ENCODE measurements at regions of chr2 and their contacts with region 1.

Region 1: DNA sequence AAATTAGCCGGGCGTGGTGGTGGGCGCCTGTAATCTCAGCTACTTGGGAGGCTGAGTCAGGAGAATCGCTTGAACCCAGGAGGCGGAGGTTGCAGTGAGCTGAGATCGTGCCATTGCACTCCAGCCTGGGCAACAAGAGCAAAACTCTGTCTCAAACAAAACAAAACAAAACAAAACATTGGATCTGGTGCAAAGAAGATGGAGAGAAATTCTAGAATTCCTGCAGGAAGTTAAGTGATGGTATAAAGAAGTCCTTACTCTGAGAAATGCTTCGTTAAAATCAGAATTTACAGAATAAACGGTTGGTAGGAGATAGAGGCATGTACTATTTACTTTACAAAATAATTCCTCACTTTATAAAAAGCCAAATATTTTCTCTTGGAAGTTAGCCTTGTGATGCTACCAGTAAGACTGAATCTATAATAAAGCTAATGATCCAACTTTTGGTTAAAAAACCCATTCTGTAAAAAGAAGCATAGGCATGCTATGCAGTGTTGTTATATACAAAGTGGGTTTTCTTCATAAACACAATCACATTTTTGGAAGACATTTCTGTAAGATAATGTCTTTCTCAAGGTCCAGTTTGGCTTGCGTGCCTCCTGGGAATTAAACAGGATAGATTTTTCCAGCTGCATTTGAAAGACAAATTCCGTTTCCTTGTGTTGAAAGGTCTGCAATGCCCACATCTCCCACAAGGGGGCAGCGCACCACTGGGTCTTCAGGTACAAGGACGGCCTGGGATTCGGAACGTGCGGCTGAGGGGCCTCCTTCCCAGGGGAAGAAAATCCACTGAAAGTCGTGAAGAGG is 35.6 kb upstream of the PNO1 start:
- DNase-seq: peak; percentile 69
- ATAC-seq: peak; percentile 26
- H3K4me3 Mint-ChIP-seq: peak overlapping the region; percentile 77
- H3K27ac Mint-ChIP-seq: peak overlapping the region; percentile 97
- H3K4me1 Mint-ChIP-seq: peaks cover 48% of the 10 kb centered on the region
- H3K27me3 Mint-ChIP-seq: no peaks in the 10 kb centered on the region
- CTCF ChIP-seq: peak; percentile 100

Region 2: GRCh38 chr2:68151037-68151436 is 29.0 kb after region 1 on chr2:
- CTCF ChIA-PET with region 1: interaction called, 13 read pairs
- POLR2A ChIA-PET with region 1: interaction called, 11 read pairs
- intact Hi-C with region 1: no loop called
- DNase-seq: no peak
- ATAC-seq: no peak
- H3K4me3 Mint-ChIP-seq: no peak overlapping the region
- H3K27ac Mint-ChIP-seq: peak overlapping the region; percentile 37
- H3K4me1 Mint-ChIP-seq: peaks cover 34% of the 10 kb centered on the region
- H3K27me3 Mint-ChIP-seq: no peaks in the 10 kb centered on the region
- CTCF ChIP-seq: no peak

Region 3: GRCh38 chr2:68185541-68186164 is 63.6 kb after region 1 on chr2:
- CTCF ChIA-PET with region 1: interaction called, 8 read pairs
- POLR2A ChIA-PET with region 1: interaction called, 8 read pairs
- intact Hi-C with region 1: loop called (anchors 1 kb)
- DNase-seq: peak; percentile 45
- ATAC-seq: peak; percentile 57
- H3K4me3 Mint-ChIP-seq: no peak overlapping the region
- H3K27ac Mint-ChIP-seq: no peak overlapping the region
- H3K4me1 Mint-ChIP-seq: peaks cover 23% of the 10 kb centered on the region
- H3K27me3 Mint-ChIP-seq: no peaks in the 10 kb centered on the region
- CTCF ChIP-seq: no peak

Region 4: DNA sequence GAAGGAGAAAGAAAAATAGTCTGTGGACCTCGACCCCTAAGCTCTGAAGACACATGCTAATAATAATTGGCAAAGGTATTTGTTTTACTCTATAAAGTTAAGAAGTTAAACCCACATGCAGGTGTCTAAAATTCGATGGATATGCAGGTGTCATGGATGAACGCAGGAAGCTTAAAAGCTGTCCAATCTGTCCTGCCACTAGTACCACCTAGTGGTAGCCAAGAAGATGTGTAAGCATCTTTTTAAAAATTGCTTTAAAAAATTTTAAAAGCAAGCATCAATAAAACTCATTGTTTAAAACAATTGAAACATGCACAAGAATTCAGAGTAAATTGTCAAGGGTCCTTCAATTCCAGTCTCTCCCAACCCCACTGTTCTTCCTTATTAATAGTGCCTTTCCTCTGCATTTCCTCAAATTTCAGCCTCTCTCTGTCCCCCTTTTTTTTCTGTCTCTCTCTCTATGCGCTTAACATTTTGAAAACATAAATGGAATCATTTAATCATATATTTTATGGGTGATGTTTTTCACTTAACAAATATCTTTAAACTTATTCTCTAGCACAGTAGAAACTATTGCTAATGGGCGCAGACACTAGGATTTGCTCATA is 160.8 kb after region 1 on chr2:
- CTCF ChIA-PET with region 1: interaction called, 22 read pairs
- POLR2A ChIA-PET with region 1: no interaction called
- intact Hi-C with region 1: loop called (anchors 1 kb)
- DNase-seq: no peak
- ATAC-seq: peak; percentile 69
- H3K4me3 Mint-ChIP-seq: no peak overlapping the region
- H3K27ac Mint-ChIP-seq: no peak overlapping the region
- H3K4me1 Mint-ChIP-seq: peaks cover 6% of the 10 kb centered on the region
- H3K27me3 Mint-ChIP-seq: no peaks in the 10 kb centered on the region
- CTCF ChIP-seq: peak; percentile 82

Measured in activated B cell treated with CpG ODN at 0.5 μM for 24 hours (primary cell).